ENCODE measurements at regions of chr7 and their contacts with region 1.

Region 1: GRCh38 chr7:155298834-155299534 is 1.3 kb downstream of the INSIG1 start:
- DNase-seq: peak; percentile 98 to 100 (median 99)

Region 2: GRCh38 chr7:155003376-155004214 is 295.4 kb before region 1 on chr7:
- intact Hi-C with region 1: loop called (anchors 5 kb)
- DNase-seq: peak; percentile 62 to 98 (median 74)

Region 3: GRCh38 chr7:155069992-155070751 is 228.8 kb before region 1 on chr7 and contains the start of gene HTR5A:
- intact Hi-C with region 1: loop called (anchors 5 kb)
- DNase-seq: peak; percentile 55 to 96 (median 74)

Region 4: DNA sequence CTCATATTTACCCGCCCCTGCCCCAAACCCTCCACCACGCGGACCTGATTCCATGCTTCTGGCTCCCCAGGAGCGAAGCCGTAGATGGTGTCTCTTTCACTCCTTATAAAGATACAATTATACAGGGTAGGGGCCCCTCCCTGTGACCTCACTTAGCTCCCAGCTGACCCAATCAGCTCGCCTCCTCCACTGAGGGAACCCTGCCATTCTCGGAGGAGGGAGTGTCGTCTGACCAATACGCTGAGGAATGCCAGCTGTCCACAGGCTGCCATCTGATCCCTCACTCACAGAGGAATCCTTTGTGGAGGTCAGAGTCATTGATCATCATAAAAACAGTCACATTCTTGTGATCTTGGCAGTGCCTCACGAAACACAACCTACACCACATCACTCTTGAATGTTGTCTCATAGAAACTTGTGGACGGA is 68.8 kb before region 1 on chr7:
- intact Hi-C with region 1: no loop called
- DNase-seq: peak; percentile 36 to 97 (median 72)

Region 5: DNA sequence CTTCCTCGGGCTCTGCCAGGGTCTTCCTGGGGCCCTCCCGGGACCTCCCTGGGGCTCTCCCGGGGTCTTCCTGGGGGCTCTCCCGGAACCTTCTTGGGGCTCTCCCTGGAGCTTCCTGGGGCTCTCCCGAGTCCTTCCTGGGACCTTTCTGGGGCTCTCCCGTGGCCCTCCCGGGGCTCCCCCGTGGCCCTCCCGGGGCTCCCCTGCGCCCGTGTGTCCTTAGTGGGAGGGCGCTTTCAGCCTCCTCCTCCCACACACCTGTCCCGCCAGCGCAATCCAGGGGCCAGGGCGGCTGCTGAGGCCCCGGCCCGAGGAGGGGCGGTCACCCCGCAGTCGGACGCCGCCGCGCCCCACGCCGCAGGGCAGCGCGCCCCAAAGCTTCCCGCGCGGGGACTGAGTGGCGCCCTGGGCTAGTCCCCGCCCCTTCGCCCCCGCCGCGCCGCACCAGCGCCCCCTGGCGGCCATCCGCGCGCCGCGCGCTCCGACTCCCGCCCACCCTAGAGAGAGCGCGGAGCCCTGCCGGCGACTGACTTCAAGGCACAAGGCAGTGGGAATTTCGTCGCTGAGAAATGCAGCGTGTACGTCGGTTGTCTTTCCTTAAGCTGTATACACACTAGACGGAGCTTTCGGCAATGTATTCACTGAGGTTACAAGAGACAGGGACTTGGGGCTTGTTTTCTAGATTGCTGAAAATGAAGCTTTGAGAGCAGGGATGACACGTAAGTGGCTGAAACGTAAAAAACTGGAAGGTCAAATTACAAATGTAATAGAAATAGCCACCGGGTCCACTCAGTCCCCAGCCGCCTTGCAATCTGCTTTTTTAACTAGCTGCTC is 45.8 kb after region 1 on chr7:
- intact Hi-C with region 1: loop called (anchors 2 kb)
- DNase-seq: peak; percentile 44 to 96 (median 80)

Region 6: GRCh38 chr7:155456738-155457564 is 158.0 kb after region 1 on chr7:
- intact Hi-C with region 1: loop called (anchors 10 kb)
- DNase-seq: peak; percentile 53 to 97 (median 74)

Region 7: DNA sequence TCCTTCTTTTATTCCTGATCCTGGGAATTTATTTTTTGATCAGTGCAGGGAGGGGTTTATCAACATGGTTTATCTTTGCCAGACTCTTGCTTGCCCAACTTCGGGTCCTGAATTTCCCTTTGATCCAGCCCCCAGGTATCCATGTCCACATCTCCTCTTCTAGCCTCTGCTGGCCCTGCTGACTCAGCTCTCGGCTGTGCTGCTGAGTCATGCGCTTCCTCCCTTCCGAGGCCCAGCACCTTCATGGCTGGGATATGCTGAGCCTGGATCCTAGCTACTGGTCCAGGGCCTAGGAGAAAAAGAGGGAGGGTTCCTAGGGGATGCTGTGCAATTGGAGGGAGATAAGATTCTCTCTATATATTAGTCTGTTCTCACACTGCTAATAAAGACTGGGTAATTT is 893.9 kb after region 1 on chr7:
- intact Hi-C with region 1: no loop called
- DNase-seq: no peak